Endothelial cell of umbilical vein (primary cell): ENCODE measurements at regions of chr2 and their contacts with region 1.

Region 1: DNA sequence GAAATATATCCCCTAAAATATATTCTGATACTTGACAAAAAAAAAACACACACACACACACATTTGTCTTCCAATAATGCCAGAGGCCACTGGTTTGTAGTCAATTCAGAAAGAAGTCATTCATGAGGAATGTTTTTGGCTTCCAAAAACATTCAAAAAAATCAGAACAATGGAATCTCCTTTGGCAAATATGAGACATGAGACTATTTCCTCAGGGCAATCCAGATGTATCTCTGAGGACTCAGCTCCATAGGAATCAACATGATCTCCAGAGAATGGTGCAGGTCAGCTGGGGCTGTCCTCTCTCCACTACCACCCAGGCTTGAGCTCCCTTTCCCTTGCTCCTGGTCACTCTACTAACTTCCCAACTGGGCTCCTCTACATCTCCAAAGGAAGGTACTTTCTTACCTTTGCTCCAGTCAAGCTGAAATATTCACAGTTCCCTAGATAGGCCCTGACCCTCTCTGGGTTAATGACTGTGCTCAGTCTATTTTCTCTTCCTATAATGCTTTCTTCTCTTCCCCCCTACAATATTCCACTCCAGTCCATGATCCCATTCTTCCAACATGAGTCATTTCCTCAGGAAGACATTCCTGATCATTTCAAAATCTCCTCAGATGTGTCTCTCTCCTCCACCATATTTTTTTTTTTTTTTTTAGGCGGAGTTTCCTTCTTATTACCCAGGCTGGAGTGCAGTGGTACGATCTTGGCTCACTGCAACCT is 145.3 kb downstream of the C1D start:
- DNase-seq: peak; percentile 90
- H3K4me3 ChIP-seq: no peak overlapping the region
- H3K27ac ChIP-seq: peak overlapping the region; percentile 96
- H3K4me1 ChIP-seq: peaks cover 28% of the 10 kb centered on the region
- H3K27me3 ChIP-seq: no peaks in the 10 kb centered on the region
- CTCF ChIP-seq: no peak
- POLR2A ChIP-seq: no peak

Region 2: DNA sequence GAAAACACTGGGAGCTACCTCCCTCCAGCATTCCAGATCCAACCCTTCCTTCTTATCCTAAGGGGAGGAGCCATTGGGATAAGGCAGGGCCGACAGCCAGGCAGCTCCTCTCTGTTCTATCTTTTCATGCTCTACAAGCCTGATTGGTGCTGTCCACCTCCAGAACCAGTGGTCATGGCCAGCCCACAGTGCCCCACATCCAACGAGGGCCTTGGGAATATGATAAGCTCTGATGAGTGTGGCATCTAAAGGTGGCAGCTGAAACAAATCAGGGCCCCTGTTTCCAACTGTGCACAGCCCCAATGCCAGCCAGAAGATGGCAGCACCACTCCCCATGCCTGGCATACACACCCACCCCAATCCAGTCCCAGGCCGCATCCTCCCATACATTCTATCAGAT is 184.0 kb before region 1 on chr2:
- CTCF ChIA-PET with region 1: interaction called, 5 read pairs
- POLR2A ChIA-PET with region 1: no interaction called
- dilution Hi-C with region 1: no loop called
- intact Hi-C with region 1: loop called (anchors 5 kb)
- DNase-seq: peak; percentile 55
- H3K4me3 ChIP-seq: no peak overlapping the region
- H3K27ac ChIP-seq: no peak overlapping the region
- H3K4me1 ChIP-seq: no peaks in the 10 kb centered on the region
- H3K27me3 ChIP-seq: no peaks in the 10 kb centered on the region
- CTCF ChIP-seq: peak; percentile 32 to 82
- POLR2A ChIP-seq: no peak

Region 3: GRCh38 chr2:67871686-67872412 is 45.6 kb before region 1 on chr2:
- CTCF ChIA-PET with region 1: interaction called, 7 read pairs
- POLR2A ChIA-PET with region 1: interaction called, 10 read pairs
- dilution Hi-C with region 1: no loop called
- intact Hi-C with region 1: loop called (anchors 1 kb)
- DNase-seq: peak; percentile 84
- H3K4me3 ChIP-seq: peak overlapping the region in 1 of 3 experiments; percentile 37
- H3K27ac ChIP-seq: peak overlapping the region; percentile 100
- H3K4me1 ChIP-seq: peaks cover 38% of the 10 kb centered on the region
- H3K27me3 ChIP-seq: no peaks in the 10 kb centered on the region
- CTCF ChIP-seq: no peak
- POLR2A ChIP-seq: no peak

Region 4: DNA sequence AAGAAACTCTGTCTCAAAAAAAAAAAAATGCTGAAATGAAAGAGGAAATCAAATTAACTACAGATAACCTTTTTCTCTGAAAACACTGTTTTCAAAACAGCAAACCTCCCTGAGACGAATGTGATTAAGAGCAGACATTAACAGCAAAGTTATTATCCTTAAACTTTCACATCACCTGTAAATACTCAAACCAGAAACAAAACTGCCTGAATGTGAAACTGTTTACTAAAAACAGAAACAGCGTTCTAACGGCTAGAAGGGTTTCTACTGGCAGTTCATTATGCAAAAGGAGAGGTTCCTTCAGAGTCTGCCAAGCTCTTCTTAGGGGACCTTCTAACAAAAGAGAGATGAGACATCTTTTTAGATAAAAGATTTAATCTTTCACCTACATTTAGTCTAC is 286.1 kb after region 1 on chr2:
- CTCF ChIA-PET with region 1: no interaction called
- POLR2A ChIA-PET with region 1: no interaction called
- dilution Hi-C with region 1: no loop called
- intact Hi-C with region 1: no loop called
- DNase-seq: no peak
- H3K4me3 ChIP-seq: no peak overlapping the region
- H3K27ac ChIP-seq: no peak overlapping the region
- H3K4me1 ChIP-seq: no peaks in the 10 kb centered on the region
- H3K27me3 ChIP-seq: no peaks in the 10 kb centered on the region
- CTCF ChIP-seq: no peak
- POLR2A ChIP-seq: no peak